Gastrocnemius medialis (tissue), 4 donors: ENCODE measurements at regions of chr4 and their contacts with region 1.

Region 1: DNA sequence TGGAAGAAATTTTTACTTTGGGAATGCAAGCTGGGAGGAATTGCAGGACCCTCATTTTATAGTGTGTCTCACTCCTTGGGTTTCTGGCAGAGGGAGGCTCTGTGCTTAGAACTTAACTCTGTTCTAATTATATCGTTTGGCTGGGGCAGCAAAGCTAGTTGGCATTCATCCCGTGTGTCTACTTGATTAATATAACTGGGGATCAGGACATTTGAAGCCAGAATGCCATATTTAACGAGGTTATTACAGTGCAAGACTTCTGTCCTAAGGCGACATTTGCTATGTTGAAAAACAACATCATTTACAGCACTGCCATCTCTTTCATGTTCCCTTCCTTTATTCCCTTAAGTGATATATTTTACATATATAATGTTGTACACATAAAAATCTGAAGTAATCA is 179.1 kb upstream of the TBC1D9 start:
- DNase-seq: peak; percentile 43 to 52
- ATAC-seq: peak; percentile 82 to 90
- H3K4me3 ChIP-seq: peak overlapping the region in 1 of 4 donors; percentile 18
- H3K27ac ChIP-seq: peak overlapping the region in 2 of 4 donors; percentile 24 to 35
- H3K4me1 ChIP-seq: peaks cover 42 to 53% of the 10 kb centered on the region in 2 donors
- H3K27me3 ChIP-seq: no peaks in the 10 kb centered on the region
- CTCF ChIP-seq: no peak
- POLR2A ChIP-seq: no peak

Region 2: GRCh38 chr4:140829825-140830224 is 105.4 kb before region 1 on chr4:
- in situ Hi-C with region 1: loop called in 1 of 4 experiments (anchors 25 kb)
- intact Hi-C with region 1: no loop called
- DNase-seq: no peak
- ATAC-seq: no peak
- H3K4me3 ChIP-seq: no peak overlapping the region
- H3K27ac ChIP-seq: no peak overlapping the region
- H3K4me1 ChIP-seq: no peaks in the 10 kb centered on the region
- H3K27me3 ChIP-seq: peaks cover 0 to 4% (median 0%) of the 10 kb centered on the region in 3 donors
- CTCF ChIP-seq: no peak
- POLR2A ChIP-seq: no peak